Gastrocnemius medialis (tissue), 4 donors: ENCODE measurements at regions of chr9 and their contacts with region 1.

Region 1: GRCh38 chr9:21812946-21813568 is 10.6 kb downstream of the MTAP start:
- DNase-seq: peak; percentile 25 to 64
- ATAC-seq: peak; percentile 70 to 84
- H3K4me3 ChIP-seq: no peak overlapping the region
- H3K27ac ChIP-seq: peak overlapping the region in 1 of 4 donors; percentile 3
- H3K4me1 ChIP-seq: peaks cover 10 to 17% of the 10 kb centered on the region in 2 donors
- H3K27me3 ChIP-seq: no peaks in the 10 kb centered on the region
- CTCF ChIP-seq: peak; percentile 71 to 89 (median 82)
- POLR2A ChIP-seq: no peak

Region 2: DNA sequence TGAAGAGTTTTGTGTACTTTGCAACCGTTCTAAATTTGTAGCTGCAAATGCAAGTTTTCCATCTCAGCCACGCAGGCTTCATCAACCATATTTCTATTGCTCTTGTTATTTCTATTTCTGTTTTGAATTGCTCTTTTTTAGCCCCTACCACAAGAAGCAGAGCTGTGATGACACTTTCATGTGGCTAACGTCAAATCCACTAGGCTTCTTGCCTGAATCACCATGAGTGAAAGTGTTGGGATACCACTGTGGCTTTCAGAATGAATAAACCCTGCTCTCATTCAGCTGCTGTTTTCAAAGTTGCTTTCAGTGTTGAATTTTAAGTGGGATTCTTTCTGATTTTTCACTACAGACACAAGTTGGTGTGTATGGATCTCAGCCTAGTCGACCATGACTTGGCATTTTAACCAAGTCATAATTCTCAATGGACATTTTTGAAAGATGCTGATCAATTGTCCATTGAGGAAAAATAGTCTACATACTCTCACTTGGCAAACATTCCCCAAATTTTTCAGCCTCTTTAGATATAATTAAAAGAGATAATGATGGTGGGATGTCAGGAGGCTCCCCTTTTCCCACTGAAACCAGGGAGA is 51.7 kb before region 1 on chr9:
- in situ Hi-C with region 1: no loop called
- intact Hi-C with region 1: no loop called
- DNase-seq: no peak
- ATAC-seq: no peak
- H3K4me3 ChIP-seq: no peak overlapping the region
- H3K27ac ChIP-seq: no peak overlapping the region
- H3K4me1 ChIP-seq: no peaks in the 10 kb centered on the region
- H3K27me3 ChIP-seq: no peaks in the 10 kb centered on the region
- CTCF ChIP-seq: no peak
- POLR2A ChIP-seq: no peak

Region 3: DNA sequence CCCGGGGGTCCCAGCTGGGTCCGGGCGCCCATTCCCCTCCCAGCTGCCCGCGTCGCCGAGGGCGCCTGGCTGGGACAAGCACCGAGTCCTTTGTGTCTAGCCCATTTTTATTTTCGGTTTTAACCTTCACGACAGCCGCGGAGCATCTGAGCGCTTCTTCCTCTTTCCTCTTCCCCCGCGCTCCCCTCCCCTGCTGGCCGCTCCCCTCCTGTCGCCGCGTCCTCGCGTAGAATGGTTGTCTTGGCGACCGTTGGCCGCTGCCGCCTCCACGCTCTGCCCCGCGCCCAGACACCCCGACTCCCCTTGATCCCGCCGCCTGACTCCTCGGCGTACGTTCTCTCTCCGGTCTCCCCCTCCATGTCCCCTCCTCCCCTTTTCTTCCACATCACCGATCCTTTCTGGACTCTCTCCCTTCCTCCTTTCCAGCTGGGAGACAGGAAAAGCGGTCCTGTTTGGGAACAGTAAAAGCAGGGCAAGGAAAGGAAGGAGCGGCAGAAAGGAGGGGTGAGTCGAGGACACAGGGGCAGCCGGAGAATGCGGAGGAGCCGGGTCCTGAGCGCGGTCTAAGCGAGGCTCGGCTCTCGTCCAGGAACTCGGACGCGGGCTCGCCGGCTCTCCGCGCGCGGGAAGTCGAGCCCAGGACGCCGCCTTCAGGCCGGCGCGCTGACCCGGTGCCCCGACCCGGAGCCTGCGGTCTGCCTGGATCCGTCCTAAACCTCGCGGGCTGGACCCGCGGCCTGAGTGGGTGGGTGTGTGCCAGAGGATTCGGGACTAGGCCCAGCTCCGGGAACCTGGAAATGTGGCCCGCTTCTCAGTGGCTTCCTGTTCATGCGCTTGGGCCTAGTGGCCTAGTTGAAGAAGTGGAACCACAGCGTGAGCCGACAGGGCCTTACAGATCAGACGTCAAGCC is 182.4 kb after region 1 on chr9:
- in situ Hi-C with region 1: loop called in 3 of 4 experiments (anchors 10 to 25 kb)
- intact Hi-C with region 1: loop called (anchors 5 kb)
- DNase-seq: peak in 1 of 2 donors; percentile 45
- ATAC-seq: peak; percentile 62 to 74
- H3K4me3 ChIP-seq: peak overlapping the region; percentile 76 to 95 (median 82)
- H3K27ac ChIP-seq: peak overlapping the region; percentile 44 to 60 (median 50)
- H3K4me1 ChIP-seq: peaks cover 4 to 5% of the 10 kb centered on the region in 2 donors
- H3K27me3 ChIP-seq: peaks cover 6 to 28% (median 25%) of the 10 kb centered on the region in 3 donors
- CTCF ChIP-seq: peak in 1 of 5 experiments; percentile 16
- POLR2A ChIP-seq: no peak

Region 4: DNA sequence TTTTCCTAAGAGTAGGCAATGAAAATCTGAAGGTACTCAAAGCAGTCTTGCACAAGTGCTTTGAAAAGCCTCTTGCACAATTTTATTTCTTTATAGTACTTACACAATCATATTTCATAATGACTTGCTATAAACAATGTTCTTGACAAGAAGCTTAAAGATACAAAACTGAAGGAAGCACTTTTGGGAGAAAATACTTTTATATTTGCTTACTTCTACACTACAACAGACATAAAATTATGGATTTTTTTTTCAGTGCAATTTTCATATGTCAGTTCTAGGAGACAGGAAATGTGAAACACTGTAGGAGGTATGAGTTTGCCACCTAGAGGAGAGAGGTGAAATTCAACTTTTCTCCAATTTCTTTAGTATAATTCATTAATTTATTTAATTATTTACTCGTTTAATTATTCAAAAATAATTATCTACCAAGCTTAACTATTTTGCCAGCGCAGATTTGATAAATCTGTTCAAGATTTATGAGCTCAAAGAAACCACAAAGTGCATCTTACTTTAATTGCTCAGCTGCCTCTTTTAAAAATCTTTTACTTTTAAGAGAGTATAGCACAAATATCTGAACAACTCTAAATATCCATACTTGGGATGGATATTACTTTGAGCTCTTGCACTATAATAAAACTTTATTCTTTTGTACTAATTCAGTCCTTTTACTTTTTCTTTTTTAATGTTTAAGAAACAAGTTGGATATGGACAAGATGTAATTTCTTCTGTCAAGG is 225.1 kb after region 1 on chr9:
- in situ Hi-C with region 1: no loop called
- intact Hi-C with region 1: loop called (anchors 2 kb)
- DNase-seq: no peak
- ATAC-seq: peak; percentile 77 to 91
- H3K4me3 ChIP-seq: no peak overlapping the region
- H3K27ac ChIP-seq: peak overlapping the region; percentile 77 to 82 (median 80)
- H3K4me1 ChIP-seq: peaks cover 32 to 50% of the 10 kb centered on the region in 2 donors
- H3K27me3 ChIP-seq: no peaks in the 10 kb centered on the region
- CTCF ChIP-seq: peak in 4 of 5 experiments; percentile 29 to 58 (median 54)
- POLR2A ChIP-seq: no peak

Region 5: GRCh38 chr9:22119537-22120158 is 306.6 kb after region 1 on chr9:
- in situ Hi-C with region 1: loop called (anchors 5 to 25 kb)
- intact Hi-C with region 1: loop called (anchors 2 kb)
- DNase-seq: no peak
- ATAC-seq: peak; percentile 58 to 89
- H3K4me3 ChIP-seq: no peak overlapping the region
- H3K27ac ChIP-seq: no peak overlapping the region
- H3K4me1 ChIP-seq: no peaks in the 10 kb centered on the region
- H3K27me3 ChIP-seq: no peaks in the 10 kb centered on the region
- CTCF ChIP-seq: peak; percentile 11 to 54 (median 34)
- POLR2A ChIP-seq: no peak

Region 6: DNA sequence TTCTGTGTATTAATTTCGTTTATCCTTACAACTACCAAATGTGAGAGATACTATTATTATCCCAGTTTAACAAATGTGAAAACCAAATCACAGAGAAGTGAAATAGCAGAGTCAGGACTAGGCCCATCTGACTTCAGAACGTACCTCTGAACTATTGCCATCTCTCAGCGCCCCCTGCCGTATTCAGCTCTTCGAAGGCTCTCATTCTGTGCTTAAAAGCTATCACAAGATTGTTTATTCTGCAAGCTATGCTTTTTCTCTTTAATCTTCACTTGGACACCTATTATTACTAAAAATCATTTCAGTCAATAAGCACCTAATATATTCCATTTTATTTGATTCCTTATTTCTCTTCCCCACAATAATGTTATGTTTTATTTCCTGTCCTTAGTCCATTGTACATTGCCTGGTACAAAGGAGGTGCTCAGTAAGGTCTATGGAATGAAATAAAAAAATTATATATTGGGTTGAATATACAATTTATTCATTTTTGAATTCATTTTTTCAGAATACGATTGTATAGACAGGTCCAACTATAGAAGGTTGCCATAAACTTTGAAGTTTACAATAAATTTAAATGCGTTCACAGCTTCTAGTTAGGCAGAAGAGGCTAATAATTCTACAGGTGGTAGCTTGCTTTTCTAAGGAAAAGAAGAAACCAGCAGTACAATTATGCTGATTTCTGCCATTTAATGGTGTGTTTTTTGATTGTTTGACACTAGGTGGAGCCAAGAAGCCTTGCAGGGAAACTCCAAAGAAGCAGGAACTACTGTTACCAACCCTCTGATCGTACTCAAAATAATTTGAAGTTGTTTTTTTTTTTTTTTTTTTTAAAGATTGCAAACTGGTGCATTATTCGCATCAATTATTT is 431.3 kb after region 1 on chr9:
- in situ Hi-C with region 1: loop called (anchors 10 kb)
- intact Hi-C with region 1: loop called (anchors 1 kb)
- DNase-seq: no peak
- ATAC-seq: peak in 1 of 2 donors; percentile 46
- H3K4me3 ChIP-seq: no peak overlapping the region
- H3K27ac ChIP-seq: no peak overlapping the region
- H3K4me1 ChIP-seq: no peaks in the 10 kb centered on the region
- H3K27me3 ChIP-seq: no peaks in the 10 kb centered on the region
- CTCF ChIP-seq: peak in 1 of 5 experiments; percentile 35
- POLR2A ChIP-seq: no peak

Region 7: DNA sequence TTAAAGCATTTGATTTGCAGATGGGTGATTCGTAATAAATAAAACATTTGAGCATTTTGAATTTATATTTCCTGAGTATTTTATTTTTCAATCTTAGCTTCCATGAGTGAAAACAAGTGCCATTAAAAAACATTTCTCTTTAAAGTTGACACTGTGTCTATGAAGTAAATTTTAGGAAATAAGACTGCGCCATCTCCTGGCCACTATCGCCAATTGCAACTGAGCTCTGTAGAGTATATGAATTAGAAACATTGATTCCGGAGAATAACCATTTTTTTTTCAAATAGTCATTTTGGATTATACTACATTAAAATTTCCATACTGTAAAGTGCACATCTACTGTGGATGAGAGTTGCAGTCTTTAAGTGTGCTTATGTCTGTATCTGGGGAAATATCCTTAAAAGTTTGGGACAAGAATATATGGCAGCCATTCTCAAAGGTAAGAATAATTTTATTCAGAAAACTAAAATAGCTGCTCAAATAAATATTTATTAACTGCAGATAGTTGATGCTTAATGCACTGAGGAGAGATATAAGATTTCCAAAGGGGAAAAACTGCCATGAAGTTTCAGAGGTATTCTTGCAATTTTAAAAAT is 639.5 kb after region 1 on chr9:
- in situ Hi-C with region 1: loop called (anchors 5 to 10 kb)
- intact Hi-C with region 1: loop called (anchors 1 kb)
- DNase-seq: peak in 1 of 2 donors; percentile 20
- ATAC-seq: peak; percentile 46 to 60
- H3K4me3 ChIP-seq: no peak overlapping the region
- H3K27ac ChIP-seq: no peak overlapping the region
- H3K4me1 ChIP-seq: peaks cover 12 to 14% of the 10 kb centered on the region in 2 donors
- H3K27me3 ChIP-seq: no peaks in the 10 kb centered on the region
- CTCF ChIP-seq: peak; percentile 59 to 81 (median 72)
- POLR2A ChIP-seq: no peak